ENCODE measurements at regions of chr12 and their contacts with region 1.

Region 1: GRCh38 chr12:124388679-124389536 is 94.0 kb downstream of the RFLNA start:
- DNase-seq: peak; percentile 93
- ATAC-seq: peak; percentile 59

Region 2: DNA sequence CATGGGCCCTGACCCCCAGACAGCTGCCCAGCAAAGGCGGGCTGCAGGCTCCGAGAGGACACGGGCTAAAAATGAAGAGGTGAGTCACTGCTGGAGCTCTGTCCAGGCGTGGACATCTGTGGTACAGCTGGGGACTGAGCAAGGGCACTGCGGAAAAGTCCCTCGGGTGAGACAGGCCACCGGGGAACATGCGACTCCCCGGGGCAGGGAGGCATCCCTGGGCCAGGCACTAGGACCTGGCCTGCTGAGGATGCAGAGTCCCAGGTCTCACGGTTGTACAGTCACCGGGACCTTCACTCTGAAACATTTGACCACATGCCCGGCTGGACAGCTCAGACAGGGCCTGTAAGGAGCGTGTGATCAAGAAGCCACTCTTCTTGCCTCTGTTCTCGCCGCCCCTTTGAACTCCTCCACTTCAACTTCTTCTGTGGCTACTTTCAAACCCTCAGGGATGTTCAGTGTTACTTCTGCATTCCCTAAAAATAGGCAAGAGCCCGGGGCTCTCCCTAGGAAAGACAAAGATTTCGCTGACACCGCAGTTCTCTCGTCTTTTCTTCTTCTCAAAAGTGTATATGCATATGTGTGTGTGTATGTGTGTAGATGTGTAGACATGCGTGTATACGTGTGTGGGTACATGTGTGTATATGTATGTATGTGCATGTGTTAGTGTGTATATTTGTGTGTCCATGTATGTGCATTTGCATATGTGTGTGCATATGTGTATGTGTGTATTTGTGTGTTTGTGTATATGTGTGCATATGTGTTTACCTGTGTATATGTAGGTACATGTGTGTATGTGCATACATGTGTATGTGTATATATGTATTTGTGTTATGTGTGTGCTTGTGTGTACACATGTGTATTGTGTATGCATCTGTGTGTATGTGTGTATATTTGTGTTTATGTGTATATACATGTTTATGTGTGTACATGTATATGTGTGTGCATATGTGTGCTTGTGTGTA is 99.0 kb before region 1 on chr12:
- intact Hi-C with region 1: no loop called
- DNase-seq: no peak
- ATAC-seq: peak; percentile 51

Region 3: DNA sequence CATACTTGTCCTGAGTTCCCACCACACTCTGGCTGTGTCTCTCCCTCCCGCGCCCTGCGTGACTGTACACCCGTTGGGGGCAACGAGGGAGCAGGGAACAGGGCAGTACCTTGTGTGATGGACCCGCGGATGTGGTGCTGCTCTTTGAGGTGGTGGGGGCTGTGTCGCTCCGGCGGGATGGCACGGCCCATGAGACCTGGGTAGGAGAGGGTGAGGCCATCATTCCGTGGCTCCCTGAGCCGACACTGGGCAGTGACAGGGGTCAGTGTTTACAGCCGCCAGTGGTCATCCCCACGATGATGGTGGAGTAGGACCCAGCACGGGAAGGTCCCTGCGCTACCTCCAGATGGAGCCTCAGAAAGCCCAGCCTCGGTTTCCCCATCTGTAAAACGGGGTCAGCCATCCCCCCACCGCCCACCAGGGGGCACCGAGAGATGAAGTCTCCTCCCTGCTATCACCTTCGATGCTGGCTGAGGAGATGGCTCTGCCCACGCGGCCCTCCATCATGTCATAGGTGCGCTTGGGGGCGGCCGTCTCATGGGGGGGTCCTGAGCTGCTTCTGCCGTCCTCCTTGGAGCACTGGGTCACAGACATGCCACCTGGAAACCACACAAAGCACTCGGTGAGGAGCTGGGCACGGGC is 41.1 kb before region 1 on chr12:
- intact Hi-C with region 1: no loop called
- DNase-seq: no peak
- ATAC-seq: no peak

Region 4: DNA sequence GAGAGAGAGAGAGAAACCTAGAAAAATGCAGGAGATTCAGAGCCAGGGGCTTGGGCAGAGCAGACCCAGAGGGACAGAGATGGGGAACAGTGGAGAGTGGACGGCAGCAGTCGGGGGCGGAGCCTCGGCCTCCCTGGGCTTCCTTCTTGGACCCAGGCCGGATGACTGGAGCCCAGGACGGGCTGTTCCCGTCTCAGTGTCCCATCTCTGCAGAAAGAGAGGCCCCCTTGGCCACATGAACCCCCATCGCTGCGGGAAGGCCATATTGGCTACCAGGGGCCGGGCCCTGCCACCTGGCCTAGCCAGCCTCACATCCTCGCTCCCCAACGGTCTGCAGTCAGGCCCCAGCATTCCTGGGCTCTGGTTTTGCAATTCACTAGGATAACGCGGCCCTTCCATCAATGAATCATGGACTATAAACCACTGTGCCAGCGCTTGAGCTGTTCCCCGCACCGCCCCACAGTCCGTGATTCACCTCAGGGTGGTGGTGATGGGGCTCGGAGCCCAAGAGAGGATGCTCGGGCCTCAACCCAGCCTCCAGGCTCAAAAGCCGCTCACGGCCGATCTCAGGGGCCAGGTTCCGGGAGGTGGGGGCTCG is 22.5 kb after region 1 on chr12:
- intact Hi-C with region 1: loop called (anchors 2 kb)
- DNase-seq: peak; percentile 79
- ATAC-seq: peak; percentile 68

Region 5: GRCh38 chr12:124422570-124423523 is 33.9 kb after region 1 on chr12:
- intact Hi-C with region 1: loop called (anchors 5 kb)
- DNase-seq: peak; percentile 94
- ATAC-seq: peak; percentile 84